ENCODE measurements at regions of chr20 and their contacts with region 1.

Region 1: DNA sequence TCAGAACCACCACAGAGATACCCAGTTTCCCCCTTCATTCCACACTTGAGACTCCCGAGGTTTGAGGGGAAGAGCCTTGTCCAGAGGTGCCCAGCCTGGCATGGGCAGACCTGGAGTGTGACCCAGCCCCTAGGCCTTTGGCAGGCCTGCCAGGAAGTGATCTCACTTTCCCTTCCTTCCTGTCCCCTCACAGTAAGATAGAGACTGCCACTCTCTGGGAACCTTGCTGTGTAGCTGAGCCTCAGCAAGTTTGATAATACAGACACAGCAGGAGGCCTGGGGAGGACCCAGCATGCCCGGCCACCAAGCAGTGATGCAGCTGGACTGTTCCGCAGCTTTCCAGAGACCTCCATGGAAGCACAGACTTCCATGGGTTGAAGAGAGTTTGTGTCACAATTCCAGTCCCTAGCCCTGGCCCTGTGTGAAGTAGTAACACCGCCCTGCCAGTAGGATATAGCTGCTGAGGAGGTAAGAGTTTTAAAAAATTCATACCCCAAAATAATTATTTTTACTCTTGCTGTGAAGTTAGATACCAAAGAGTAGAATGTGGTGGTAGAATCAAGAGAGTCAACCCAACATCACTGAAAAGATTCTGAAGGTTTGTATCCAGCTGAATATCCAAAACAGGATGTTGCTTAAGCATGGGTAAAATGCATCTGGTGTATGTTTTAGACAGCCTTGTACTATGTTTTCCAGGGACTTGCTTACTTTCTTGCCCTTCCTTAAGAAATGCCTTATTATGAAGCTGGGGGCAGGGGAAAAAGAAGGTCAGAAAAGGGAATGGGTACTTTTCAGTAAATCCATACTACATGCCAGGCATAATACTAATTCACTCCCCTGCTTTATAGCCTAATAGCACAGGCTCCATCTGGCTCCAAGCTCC is 16.3 kb downstream of the PKIG start:
- DNase-seq: no peak
- H3K4me3 ChIP-seq: no peak overlapping the region
- H3K27ac ChIP-seq: no peak overlapping the region
- H3K4me1 ChIP-seq: peaks cover 12 to 24% (median 17%) of the 10 kb centered on the region in 4 experiments
- H3K27me3 ChIP-seq: no peaks in the 10 kb centered on the region; a peak in 1 of 7 replicates
- CTCF ChIP-seq: peak in 1 of 3 experiments; percentile 20; a peak in 1 of 4 replicates
- EP300 ChIP-seq: no peak
- POLR2A ChIP-seq: no peak
- RAD21 ChIP-seq: no peak

Region 2: DNA sequence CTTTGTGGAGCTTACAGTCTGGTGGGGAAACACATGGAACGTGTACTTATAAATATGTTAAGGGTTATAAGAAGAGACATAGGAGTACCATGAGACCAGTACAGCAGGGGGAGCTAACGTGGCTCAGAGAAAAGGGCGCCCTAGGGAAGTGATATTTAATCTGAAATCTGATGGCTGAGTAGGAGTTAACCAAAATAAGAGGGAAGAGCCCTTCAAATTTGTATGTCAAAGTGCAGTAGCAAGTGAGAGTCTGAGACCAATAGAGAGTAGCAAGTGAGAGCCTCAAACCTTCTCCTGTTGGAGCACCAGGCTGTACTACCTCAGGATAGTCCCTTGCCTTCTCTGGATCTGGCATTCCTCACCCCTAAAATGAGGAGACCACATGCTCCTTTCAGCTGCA is 22.4 kb before region 1 on chr20:
- CTCF ChIA-PET with region 1: interaction called, 10 read pairs
- POLR2A ChIA-PET with region 1: no interaction called
- DNase-seq: no peak
- H3K4me3 ChIP-seq: no peak overlapping the region
- H3K27ac ChIP-seq: no peak overlapping the region
- H3K4me1 ChIP-seq: peaks cover 0 to 3% (median 0%) of the 10 kb centered on the region in 4 experiments; a peak in 1 of 7 replicates
- H3K27me3 ChIP-seq: no peaks in the 10 kb centered on the region
- CTCF ChIP-seq: peak in 2 of 3 experiments; percentile 29 to 32; a peak in 3 of 4 replicates
- EP300 ChIP-seq: no peak
- POLR2A ChIP-seq: no peak
- RAD21 ChIP-seq: peak; percentile 28 to 46

Region 3: DNA sequence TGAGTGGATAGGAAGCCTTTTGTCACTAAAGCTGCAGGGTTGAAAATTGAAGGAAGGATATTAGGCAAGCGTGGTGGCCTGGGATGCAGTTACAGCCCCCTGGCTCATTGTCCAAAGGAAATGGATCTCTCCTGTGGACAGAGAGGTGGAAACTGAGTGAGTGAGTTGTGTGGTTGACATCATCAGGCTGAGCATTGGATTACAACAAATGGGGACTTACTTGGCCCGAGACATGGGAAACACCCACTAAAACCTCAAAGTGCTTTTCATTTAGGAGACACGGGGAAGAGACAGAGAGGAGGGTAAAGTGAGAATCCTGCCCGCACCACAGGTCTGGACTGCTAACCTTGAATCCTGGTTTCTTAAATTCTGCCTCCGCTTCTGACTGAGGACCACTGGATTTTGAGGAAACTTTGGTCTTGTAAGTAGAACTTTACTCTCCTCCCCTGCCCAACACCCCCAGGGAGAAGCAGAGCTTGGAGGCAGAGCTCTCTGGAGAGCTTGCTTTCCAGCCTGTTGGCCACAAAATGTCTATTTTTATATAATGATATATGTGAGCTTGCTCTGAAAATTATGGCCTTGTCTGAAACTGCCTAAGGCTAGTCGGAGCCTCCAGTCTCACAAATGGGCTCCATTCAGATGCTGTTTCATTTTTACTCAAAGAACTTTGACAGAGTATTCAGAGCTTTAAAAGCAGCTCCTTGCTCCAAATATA is 16.2 kb before region 1 on chr20 and contains the start of gene PKIG:
- CTCF ChIA-PET with region 1: interaction called, 18 read pairs
- POLR2A ChIA-PET with region 1: no interaction called
- DNase-seq: no peak
- H3K4me3 ChIP-seq: no peak within 1 kb of the TSS
- H3K27ac ChIP-seq: no peak within 1 kb of the TSS
- H3K4me1 ChIP-seq: peaks cover 7 to 17% (median 11%) of the 10 kb centered on the region in 4 experiments
- H3K27me3 ChIP-seq: no peaks in the 10 kb centered on the region
- CTCF ChIP-seq: no peak
- EP300 ChIP-seq: no peak
- POLR2A ChIP-seq: no peak
- RAD21 ChIP-seq: no peak
- total RNA-seq, gene PKIG: 25.4 and 26.7 TPM in 2 replicates

Region 4: GRCh38 chr20:44618318-44618731 is 19.7 kb after region 1 on chr20:
- CTCF ChIA-PET with region 1: interaction called, 11 read pairs
- POLR2A ChIA-PET with region 1: no interaction called
- DNase-seq: no peak
- H3K4me3 ChIP-seq: no peak overlapping the region
- H3K27ac ChIP-seq: no peak overlapping the region
- H3K4me1 ChIP-seq: peaks cover 0 to 28% (median 15%) of the 10 kb centered on the region in 4 experiments; a peak in 6 of 7 replicates
- H3K27me3 ChIP-seq: peaks cover 0 to 3% (median 1%) of the 10 kb centered on the region in 4 experiments; a peak in 3 of 7 replicates
- CTCF ChIP-seq: no peak
- EP300 ChIP-seq: no peak
- POLR2A ChIP-seq: no peak
- RAD21 ChIP-seq: no peak